ENCODE measurements at regions of chr14 and their contacts with region 1.

Region 1: GRCh38 chr14:77320238-77320935 is at the start of gene POMT2:
- DNase-seq: peak; percentile 95
- ATAC-seq: peak; percentile 53
- H3K4me3 Mint-ChIP-seq: peak within 1 kb of the TSS; percentile 92
- H3K27ac Mint-ChIP-seq: peak within 1 kb of the TSS; percentile 99
- H3K4me1 Mint-ChIP-seq: peaks cover 19% of the 10 kb centered on the region
- H3K27me3 Mint-ChIP-seq: no peaks in the 10 kb centered on the region
- total RNA-seq, gene POMT2: 11.7 to 18.2 TPM

Region 2: GRCh38 chr14:76956316-76957090 is 363.9 kb before region 1 on chr14:
- CTCF ChIA-PET with region 1: interaction called, 4 read pairs
- POLR2A ChIA-PET with region 1: no interaction called
- intact Hi-C with region 1: loop called in 1 of 2 experiments (anchors 5 kb)
- DNase-seq: peak; percentile 96
- ATAC-seq: peak; percentile 62
- H3K4me3 Mint-ChIP-seq: peak overlapping the region; percentile 71
- H3K27ac Mint-ChIP-seq: peak overlapping the region; percentile 91
- H3K4me1 Mint-ChIP-seq: peaks cover 81% of the 10 kb centered on the region
- H3K27me3 Mint-ChIP-seq: no peaks in the 10 kb centered on the region

Region 3: DNA sequence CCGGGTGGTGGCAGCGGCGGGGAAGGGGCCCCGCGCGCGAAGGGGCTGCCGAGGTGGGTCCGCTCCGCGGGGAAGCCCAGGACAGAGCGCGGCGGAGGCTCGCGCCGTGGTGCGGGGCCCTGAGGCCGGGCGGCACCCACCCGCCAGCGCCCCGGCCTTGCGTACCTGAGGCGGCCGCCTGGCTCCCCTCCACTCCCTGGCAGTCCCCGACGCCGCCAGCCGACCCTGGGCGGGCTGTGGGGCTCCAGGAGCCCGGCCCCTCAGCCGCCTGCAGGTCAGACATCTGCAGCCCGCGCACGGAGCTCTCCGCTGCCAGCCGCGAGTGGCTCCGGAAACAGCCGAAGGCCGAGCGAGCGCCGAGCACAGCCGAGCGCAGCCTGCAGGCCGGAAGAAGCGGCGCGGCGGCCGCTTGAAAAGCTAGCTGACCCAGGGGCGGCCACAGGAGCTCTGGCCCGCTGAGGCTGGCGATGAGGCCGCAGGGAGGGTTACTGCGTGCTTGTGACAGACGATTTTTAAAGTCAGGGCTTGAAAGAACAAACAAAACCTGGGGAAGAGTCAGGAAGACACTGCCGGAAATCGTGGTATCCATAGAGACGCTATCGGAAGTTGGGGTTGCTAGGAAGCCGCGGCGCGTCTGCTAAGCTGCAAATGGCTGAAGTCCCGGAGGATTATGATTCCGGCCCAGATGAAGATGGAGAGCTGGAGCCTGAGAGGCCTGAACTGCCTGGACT is 56.5 kb after region 1 on chr14 and contains the starts of genes SAMD15 and TMED8:
- CTCF ChIA-PET with region 1: interaction called, 7 read pairs
- POLR2A ChIA-PET with region 1: interaction called, 10 read pairs
- intact Hi-C with region 1: loop called (anchors 1 kb)
- DNase-seq: peak; percentile 91
- ATAC-seq: peak; percentile 95
- H3K4me3 Mint-ChIP-seq: no peak within 1 kb of the TSS
- H3K27ac Mint-ChIP-seq: peak within 1 kb of the TSS; percentile 86
- H3K4me1 Mint-ChIP-seq: peaks cover 40% of the 10 kb centered on the region
- H3K27me3 Mint-ChIP-seq: no peaks in the 10 kb centered on the region
- total RNA-seq, gene SAMD15: 0.25 TPM
- total RNA-seq, gene TMED8: 25.3 to 27.9 TPM

Region 4: DNA sequence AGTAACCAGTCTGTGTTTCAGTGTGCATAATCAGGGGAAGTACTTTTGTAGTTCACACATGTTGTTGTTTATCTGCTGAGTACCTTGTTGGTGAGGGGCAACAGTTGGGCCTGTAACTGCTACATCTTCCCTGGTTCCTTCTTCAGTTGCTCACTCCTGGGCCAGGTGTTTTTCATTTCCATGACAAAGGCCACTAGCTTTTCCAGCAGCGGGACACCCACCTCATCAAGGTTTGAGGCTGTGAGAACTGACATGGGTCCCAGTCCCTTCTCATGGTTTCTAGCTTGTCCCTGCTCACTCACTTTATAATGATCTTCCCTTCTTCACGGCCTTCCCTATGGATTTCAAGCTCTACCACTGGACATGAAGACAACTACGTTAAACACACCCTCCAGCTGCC is 104.5 kb after region 1 on chr14:
- CTCF ChIA-PET with region 1: no interaction called
- POLR2A ChIA-PET with region 1: no interaction called
- intact Hi-C with region 1: no loop called
- DNase-seq: no peak
- ATAC-seq: no peak
- H3K4me3 Mint-ChIP-seq: no peak overlapping the region
- H3K27ac Mint-ChIP-seq: no peak overlapping the region
- H3K4me1 Mint-ChIP-seq: no peaks in the 10 kb centered on the region
- H3K27me3 Mint-ChIP-seq: no peaks in the 10 kb centered on the region

Region 5: GRCh38 chr14:77554207-77554606 is 233.8 kb after region 1 on chr14:
- CTCF ChIA-PET with region 1: interaction called, 4 read pairs
- POLR2A ChIA-PET with region 1: no interaction called
- intact Hi-C with region 1: loop called in 1 of 2 experiments (anchors 5 kb)
- DNase-seq: peak; percentile 33
- ATAC-seq: peak; percentile 63
- H3K4me3 Mint-ChIP-seq: no peak overlapping the region
- H3K27ac Mint-ChIP-seq: peak overlapping the region; percentile 78
- H3K4me1 Mint-ChIP-seq: peaks cover 20% of the 10 kb centered on the region
- H3K27me3 Mint-ChIP-seq: no peaks in the 10 kb centered on the region

Region 6: DNA sequence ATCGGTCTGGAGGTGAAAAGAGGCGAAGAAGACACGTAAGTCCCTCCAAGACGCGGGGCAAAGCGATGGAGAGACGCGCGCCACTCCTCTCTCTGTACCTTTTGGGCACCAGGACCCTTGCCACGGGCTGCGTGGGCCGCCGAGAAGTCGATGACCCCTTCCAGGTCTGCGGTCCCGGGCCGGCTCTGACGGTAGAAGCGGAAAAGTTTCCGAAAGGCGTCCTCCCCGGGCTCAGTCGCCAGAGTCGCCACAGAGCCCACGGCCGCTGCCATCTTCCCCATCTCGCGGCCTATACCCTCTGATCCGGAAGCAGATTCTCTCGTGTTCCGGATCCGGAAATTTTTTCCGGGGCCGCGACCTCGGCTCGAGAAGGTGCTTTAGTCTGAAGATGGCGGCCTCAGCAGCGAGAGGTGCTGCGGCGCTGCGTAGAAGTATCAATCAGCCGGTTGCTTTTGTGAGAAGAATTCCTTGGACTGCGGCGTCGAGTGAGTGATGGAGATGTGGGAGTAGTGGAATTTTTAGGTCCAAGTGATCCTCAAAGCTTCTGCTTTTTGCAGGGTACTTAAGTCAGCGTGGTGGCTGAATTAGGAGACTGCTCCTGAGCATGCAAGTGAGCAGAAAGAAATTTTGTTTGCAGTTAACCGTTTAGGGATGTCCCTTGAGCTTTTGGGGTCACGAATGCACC is 387.5 kb after region 1 on chr14 and contains the starts of genes ALKBH1 and SLIRP:
- CTCF ChIA-PET with region 1: no interaction called
- POLR2A ChIA-PET with region 1: no interaction called
- intact Hi-C with region 1: loop called (anchors 1 to 2 kb)
- DNase-seq: peak; percentile 93
- ATAC-seq: peak; percentile 98
- H3K4me3 Mint-ChIP-seq: peak within 1 kb of the TSS; percentile 95
- H3K27ac Mint-ChIP-seq: peak within 1 kb of the TSS; percentile 94
- H3K4me1 Mint-ChIP-seq: peaks cover 45% of the 10 kb centered on the region
- H3K27me3 Mint-ChIP-seq: no peaks in the 10 kb centered on the region
- total RNA-seq, gene ALKBH1: 16.3 to 16.8 TPM
- total RNA-seq, gene SLIRP: 143 to 156 TPM

Region 7: GRCh38 chr14:77760381-77761246 is 440.2 kb after region 1 on chr14 and contains the start of gene SNW1:
- CTCF ChIA-PET with region 1: interaction called, 3 read pairs
- POLR2A ChIA-PET with region 1: interaction called, 3 read pairs
- intact Hi-C with region 1: loop called (anchors 1 to 2 kb)
- DNase-seq: peak; percentile 95
- ATAC-seq: peak; percentile 96
- H3K4me3 Mint-ChIP-seq: peak within 1 kb of the TSS; percentile 96
- H3K27ac Mint-ChIP-seq: peak within 1 kb of the TSS; percentile 98
- H3K4me1 Mint-ChIP-seq: peaks cover 33% of the 10 kb centered on the region
- H3K27me3 Mint-ChIP-seq: no peaks in the 10 kb centered on the region
- total RNA-seq, gene SNW1: 134 to 135 TPM

Region 8: DNA sequence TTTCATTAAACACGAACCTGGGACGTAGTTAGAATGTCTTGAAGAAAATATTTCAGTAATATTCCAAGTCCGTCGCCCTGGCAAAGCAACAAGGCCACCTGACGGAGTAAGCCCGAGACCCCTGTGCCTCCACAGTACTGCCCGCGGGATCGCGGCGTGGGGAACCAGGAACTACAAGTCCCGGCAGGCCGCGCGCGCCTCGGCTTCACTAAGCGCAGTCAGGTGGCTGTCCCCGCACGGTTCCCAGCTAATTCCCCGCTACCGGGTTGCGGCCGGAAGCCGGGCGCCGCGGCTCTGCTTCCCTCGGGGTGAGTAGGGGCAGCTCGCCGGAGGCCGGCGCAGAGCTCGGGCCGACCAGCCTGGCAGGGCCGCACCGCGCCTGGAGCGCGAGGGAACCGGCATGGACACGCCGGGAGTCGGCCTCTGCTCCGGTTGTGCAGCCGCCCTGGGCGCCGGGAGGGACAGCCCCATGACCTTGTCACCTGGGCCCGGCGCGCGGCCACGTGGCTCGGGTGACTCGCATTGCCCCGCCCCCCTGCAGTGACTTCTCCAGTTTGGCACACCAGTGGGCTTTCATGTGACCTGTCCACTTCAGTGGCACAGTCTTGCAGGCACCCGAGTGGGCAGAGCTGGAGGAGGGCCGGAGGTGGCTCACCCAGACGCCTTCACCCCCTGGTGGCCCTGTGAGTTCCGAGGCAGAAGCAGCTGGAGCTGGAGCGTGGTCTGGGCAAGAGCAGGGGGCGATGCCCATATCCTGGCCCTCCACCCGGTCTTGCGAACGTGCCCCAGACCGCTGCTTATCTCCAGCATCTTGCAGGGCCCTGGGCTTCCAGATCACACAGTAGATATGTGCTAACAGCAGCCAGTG is 479.7 kb after region 1 on chr14 and contains the start of gene ADCK1:
- CTCF ChIA-PET with region 1: no interaction called
- POLR2A ChIA-PET with region 1: no interaction called
- intact Hi-C with region 1: loop called in 1 of 2 experiments (anchors 1 kb)
- DNase-seq: peak; percentile 94
- ATAC-seq: peak; percentile 94
- H3K4me3 Mint-ChIP-seq: peak within 1 kb of the TSS; percentile 83
- H3K27ac Mint-ChIP-seq: peak within 1 kb of the TSS; percentile 87
- H3K4me1 Mint-ChIP-seq: peaks cover 11% of the 10 kb centered on the region
- H3K27me3 Mint-ChIP-seq: no peaks in the 10 kb centered on the region
- total RNA-seq, gene ADCK1: 4.6 to 4.9 TPM

Measured in activated CD4-positive, alpha-beta T cell treated with anti-CD3 and anti-CD28 coated beads for 36 hours (primary cell).